IMR-90 (cell line): ENCODE measurements at regions of chr1 and their contacts with region 1.

Region 1: GRCh38 chr1:55443175-55443915 is 228.2 kb upstream of the USP24 start:
- DNase-seq: peak; percentile 100
- ATAC-seq: peak; percentile 94
- H3K4me3 ChIP-seq: no peak overlapping the region
- H3K27ac ChIP-seq: peak overlapping the region; percentile 61
- H3K4me1 ChIP-seq: peaks cover 22% of the 10 kb centered on the region
- H3K27me3 ChIP-seq: no peaks in the 10 kb centered on the region
- CTCF ChIP-seq: no peak
- POLR2A ChIP-seq: no peak
- RAD21 ChIP-seq: peak; percentile 28; the same call in 1 of the 2 replicates

Region 2: DNA sequence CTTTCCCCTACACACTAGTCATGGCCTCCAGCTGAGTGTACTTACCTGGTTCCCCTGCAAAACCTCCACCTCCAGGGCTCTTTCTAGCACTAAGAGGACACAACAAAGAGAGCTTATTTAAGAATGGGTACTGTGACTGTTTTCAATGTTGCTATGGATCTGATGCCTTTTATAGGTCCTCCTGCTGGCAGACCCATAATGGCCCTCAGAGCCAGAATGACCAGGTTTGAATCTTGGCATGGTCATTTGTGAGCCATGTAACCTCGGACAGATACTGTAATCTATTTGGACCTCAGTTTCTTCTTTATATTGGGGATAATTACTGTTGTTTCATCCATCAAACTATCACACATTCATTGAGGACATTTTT is 90.5 kb before region 1 on chr1:
- CTCF ChIA-PET with region 1: no interaction called
- POLR2A ChIA-PET with region 1: interaction called, 16 read pairs
- dilution Hi-C with region 1: no loop called
- in situ Hi-C with region 1: no loop called
- intact Hi-C with region 1: no loop called
- DNase-seq: no peak
- ATAC-seq: no peak
- H3K4me3 ChIP-seq: no peak overlapping the region
- H3K27ac ChIP-seq: no peak overlapping the region
- H3K4me1 ChIP-seq: no peaks in the 10 kb centered on the region
- H3K27me3 ChIP-seq: peaks cover 2% of the 10 kb centered on the region
- CTCF ChIP-seq: no peak
- POLR2A ChIP-seq: no peak
- RAD21 ChIP-seq: no peak

Region 3: DNA sequence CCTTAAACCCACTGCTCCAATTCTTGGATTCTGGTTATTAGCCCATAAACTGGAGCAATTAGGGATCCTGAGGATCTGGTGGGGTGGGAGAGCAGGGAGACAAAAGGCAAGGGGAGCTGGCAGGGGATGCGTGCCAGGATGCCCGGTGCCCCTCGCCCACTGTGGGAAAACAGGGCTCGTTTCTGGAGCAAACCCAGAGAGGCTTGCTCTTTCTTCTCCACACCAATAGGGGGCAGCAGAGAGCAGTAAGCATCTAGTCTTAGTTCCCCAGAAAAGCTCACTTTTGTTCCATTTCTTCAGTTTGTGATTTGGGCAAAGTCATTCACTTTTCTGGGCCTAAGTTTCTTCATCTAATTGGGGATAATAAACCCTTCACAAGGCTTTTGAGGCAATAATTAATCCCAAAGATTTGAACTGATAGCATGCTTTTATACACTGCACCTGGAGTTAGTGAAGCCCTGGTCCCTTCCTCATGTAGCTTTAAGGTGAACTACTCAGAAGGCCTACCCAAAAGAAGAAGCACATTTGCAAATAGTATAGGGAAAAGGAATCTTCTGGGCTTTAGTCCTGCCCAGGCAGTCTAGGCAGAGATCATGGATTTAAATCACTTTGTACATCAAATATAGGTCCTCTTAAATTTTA is 67.6 kb before region 1 on chr1:
- CTCF ChIA-PET with region 1: interaction called, 4 read pairs
- POLR2A ChIA-PET with region 1: no interaction called
- dilution Hi-C with region 1: no loop called
- in situ Hi-C with region 1: no loop called
- intact Hi-C with region 1: loop called (anchors 1 kb)
- DNase-seq: peak; percentile 47
- ATAC-seq: peak; percentile 68; the same call in 1 of the 2 replicates
- H3K4me3 ChIP-seq: no peak overlapping the region
- H3K27ac ChIP-seq: 0 out of 2 replicates have a peak overlapping the region, but pooled peaks have one; percentile 4
- H3K4me1 ChIP-seq: peaks cover 13% of the 10 kb centered on the region
- H3K27me3 ChIP-seq: no peaks in the 10 kb centered on the region
- CTCF ChIP-seq: peak; percentile 79
- POLR2A ChIP-seq: no peak
- RAD21 ChIP-seq: peak; percentile 76

Region 4: GRCh38 chr1:55428944-55429931 is 14.1 kb before region 1 on chr1:
- CTCF ChIA-PET with region 1: interaction called, 3 read pairs
- POLR2A ChIA-PET with region 1: no interaction called
- dilution Hi-C with region 1: no loop called
- in situ Hi-C with region 1: no loop called
- intact Hi-C with region 1: loop called (anchors 1 kb)
- DNase-seq: peak; percentile 100
- ATAC-seq: peak; percentile 85
- H3K4me3 ChIP-seq: no peak overlapping the region
- H3K27ac ChIP-seq: peak overlapping the region; percentile 80
- H3K4me1 ChIP-seq: peaks cover 38% of the 10 kb centered on the region
- H3K27me3 ChIP-seq: no peaks in the 10 kb centered on the region
- CTCF ChIP-seq: no peak
- POLR2A ChIP-seq: 0 out of 2 replicates have a peak, but pooled peaks have one; percentile 15
- RAD21 ChIP-seq: peak; percentile 29; the same call in 1 of the 2 replicates

Region 5: DNA sequence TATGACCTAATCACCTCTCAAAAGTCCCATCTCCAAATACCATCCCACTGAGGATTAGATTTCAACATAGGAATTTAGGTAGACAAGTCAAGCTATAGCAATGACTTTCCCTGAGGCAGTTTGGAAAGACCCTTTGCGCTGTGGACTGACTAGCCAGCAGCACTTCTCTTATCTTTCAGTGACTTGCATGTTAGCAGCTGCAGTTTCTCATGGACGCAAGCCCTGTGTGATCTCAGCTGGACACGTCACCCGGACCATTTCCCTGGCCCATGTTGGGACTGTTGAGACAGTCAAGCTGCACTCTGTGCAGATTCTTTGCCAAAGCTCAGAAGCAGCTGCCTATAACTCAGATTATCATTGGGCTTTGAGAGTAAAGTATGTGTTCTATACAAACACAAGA is 180.0 kb after region 1 on chr1:
- CTCF ChIA-PET with region 1: no interaction called
- POLR2A ChIA-PET with region 1: no interaction called
- dilution Hi-C with region 1: no loop called
- in situ Hi-C with region 1: no loop called
- intact Hi-C with region 1: no loop called
- DNase-seq: peak; percentile 95
- ATAC-seq: peak; percentile 65
- H3K4me3 ChIP-seq: no peak overlapping the region
- H3K27ac ChIP-seq: peak overlapping the region; percentile 84; the same call in 1 of the 2 replicates
- H3K4me1 ChIP-seq: peaks cover 2% of the 10 kb centered on the region; the same call in 1 of the 2 replicates
- H3K27me3 ChIP-seq: no peaks in the 10 kb centered on the region
- CTCF ChIP-seq: no peak
- POLR2A ChIP-seq: no peak
- RAD21 ChIP-seq: no peak

Region 6: GRCh38 chr1:55718758-55719671 is 275.7 kb after region 1 on chr1:
- CTCF ChIA-PET with region 1: no interaction called
- POLR2A ChIA-PET with region 1: no interaction called
- dilution Hi-C with region 1: no loop called
- in situ Hi-C with region 1: no loop called
- intact Hi-C with region 1: loop called (anchors 2 kb)
- DNase-seq: peak; percentile 100
- ATAC-seq: peak; percentile 75
- H3K4me3 ChIP-seq: no peak overlapping the region
- H3K27ac ChIP-seq: peak overlapping the region; percentile 97
- H3K4me1 ChIP-seq: peaks cover 31% of the 10 kb centered on the region
- H3K27me3 ChIP-seq: no peaks in the 10 kb centered on the region
- CTCF ChIP-seq: no peak
- POLR2A ChIP-seq: peak; percentile 54; the same call in 1 of the 2 replicates
- RAD21 ChIP-seq: peak; percentile 38